ENCODE measurements at regions of chr10 and their contacts with region 1.

Region 1: DNA sequence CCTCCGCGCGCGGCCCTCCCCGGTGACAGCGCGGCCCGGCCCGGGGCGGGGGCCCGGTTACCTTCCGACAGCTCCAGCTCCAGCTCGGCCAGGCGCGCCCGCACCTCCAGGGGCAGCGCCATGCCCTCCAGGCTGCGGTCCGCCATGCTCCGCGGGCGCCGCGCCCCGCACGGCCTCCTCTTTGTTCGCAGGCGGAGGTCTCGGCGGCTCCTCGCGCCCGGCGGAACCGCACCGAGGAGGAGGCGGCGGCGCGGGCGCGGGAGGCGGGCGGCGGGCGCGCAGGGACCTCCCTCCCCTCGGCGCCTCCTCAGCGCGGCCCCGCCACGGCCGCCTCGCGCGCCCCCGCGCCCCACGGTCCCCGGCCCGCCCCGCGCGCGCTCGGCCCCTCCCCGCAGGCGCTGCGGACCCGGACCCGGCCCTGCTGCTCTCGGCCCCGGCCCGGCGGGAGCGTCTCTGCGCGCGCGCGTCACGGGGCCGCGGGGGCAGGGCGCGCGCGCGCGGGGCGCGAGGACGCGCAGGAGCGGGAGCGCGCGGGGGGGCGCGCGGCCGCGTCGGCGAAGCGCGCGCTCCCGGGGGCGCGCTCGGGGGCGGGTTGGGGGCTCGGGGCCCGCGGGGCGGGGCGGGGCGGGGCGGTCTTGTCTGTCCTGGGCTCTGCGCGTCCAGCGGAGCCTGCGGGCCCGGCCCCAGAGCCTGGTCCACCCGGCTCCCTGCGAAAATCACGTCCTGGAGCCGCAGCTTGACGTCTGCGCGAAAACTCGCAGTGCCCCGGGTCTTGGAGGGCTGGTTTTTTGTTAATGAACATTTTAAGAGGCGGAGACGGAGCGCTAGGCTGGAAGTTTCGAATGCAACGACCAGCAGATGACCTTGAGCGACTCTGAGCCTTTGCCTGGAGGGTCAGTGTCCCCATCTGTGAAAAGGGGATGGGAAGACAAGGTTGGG is at the start of gene DIP2C:
- DNase-seq: peak in 39 of 42 donors; percentile 57 to 89 (median 78)

Region 2: GRCh38 chr10:635121-635861 is 54.4 kb before region 1 on chr10:
- intact Hi-C with region 1: loop called (anchors 5 kb)
- DNase-seq: peak in 40 of 42 donors; percentile 60 to 90 (median 78)

Region 3: DNA sequence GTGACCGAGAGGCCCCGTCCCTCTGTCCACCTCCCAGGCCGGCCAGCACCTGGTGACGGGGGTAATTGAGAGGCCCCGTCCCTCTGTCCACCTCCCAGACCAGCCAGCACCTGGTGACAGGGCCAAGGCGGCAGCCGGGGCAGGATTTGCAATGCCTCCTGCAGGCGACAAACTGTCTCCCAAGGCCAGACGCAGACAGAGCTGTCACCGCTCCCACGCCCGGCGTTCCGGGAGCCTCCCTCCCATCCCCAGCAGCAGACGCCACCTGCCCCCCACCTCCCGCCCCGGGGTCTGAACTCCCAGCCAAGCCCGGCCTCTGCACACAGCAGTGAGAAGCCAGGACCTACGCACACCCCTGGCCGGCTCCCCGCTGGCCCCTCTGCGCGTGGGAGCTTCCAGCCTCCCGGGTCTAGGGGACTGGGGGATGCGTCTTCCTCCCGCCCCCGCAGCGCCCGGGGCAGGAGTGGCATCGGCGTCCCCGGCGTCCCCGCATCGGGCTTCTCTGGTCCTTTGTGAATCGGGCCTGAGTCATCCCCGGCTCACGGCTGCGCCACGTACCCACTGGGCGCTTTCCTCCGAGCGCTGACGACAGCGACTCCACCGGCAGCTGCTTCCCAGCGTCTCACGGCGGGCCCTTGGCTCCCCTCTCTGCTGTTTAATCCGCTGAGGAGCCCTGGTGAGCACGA is 94.8 kb after region 1 on chr10:
- intact Hi-C with region 1: loop called (anchors 10 kb)
- DNase-seq: peak; percentile 54 to 94 (median 76)